Activated CD4-positive, alpha-beta T cell treated with anti-CD3 and anti-CD28 coated beads for 36 hours (primary cell): ENCODE measurements at regions of chr11 and their contacts with region 1.

Region 1: GRCh38 chr11:506238-506994 is 626 bp downstream of the RNH1 start:
- DNase-seq: peak; percentile 99
- ATAC-seq: peak; percentile 78
- H3K4me3 Mint-ChIP-seq: peak overlapping the region; percentile 93
- H3K27ac Mint-ChIP-seq: peak overlapping the region; percentile 99
- H3K4me1 Mint-ChIP-seq: peaks cover 22% of the 10 kb centered on the region
- H3K27me3 Mint-ChIP-seq: no peaks in the 10 kb centered on the region

Region 2: GRCh38 chr11:313787-314547 is 192.4 kb before region 1 on chr11 and contains the start of gene IFITM1:
- CTCF ChIA-PET with region 1: no interaction called
- POLR2A ChIA-PET with region 1: no interaction called
- intact Hi-C with region 1: loop called in 1 of 2 experiments (anchors 2 kb)
- DNase-seq: peak; percentile 78
- ATAC-seq: peak; percentile 40
- H3K4me3 Mint-ChIP-seq: peak within 1 kb of the TSS; percentile 95
- H3K27ac Mint-ChIP-seq: peak within 1 kb of the TSS; percentile 99
- H3K4me1 Mint-ChIP-seq: peaks cover 29% of the 10 kb centered on the region
- H3K27me3 Mint-ChIP-seq: no peaks in the 10 kb centered on the region
- total RNA-seq, gene IFITM1: 248 to 285 TPM

Region 3: DNA sequence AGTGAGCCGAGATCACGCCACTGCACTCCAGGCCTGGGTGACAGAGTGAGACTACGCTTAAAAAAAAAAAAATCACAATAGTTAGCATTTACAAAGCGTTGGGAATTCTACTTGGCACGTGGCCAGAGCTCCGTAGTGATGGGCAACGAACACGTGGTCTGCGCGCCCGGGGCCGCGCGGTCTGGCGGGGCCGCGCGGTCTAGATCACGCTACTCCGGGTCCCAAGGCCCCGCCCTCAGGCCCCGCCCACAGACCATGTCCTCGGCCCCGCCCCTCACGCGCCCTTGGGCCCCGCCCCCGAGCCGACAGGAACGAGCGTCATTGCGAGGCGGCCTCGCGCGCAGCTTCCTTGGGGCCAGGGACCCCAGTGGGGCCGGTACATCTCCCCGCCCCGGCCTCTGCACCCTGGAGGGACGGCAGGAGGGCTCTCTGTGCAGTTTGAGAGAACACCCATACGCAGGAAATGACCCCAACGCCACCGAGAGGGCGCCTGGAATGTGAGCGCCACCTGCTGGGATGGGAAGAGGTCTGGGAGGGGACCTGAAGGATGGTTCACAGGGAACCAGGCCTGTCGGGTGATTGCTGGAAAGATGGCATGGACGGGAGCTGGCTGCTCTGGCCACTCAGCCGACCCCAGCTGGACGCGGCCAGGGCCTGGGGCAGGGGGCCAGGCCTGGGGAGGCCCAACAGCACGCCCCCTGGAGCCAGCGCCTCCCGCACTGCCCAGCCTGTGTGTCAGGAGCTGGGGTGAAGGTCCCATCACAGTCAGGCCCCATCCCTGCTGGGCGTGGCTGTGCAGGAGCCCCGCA is 58.3 kb before region 1 on chr11:
- CTCF ChIA-PET with region 1: no interaction called
- POLR2A ChIA-PET with region 1: no interaction called
- intact Hi-C with region 1: loop called (anchors 1 kb)
- DNase-seq: peak; percentile 99
- ATAC-seq: peak; percentile 79
- H3K4me3 Mint-ChIP-seq: peak overlapping the region; percentile 86
- H3K27ac Mint-ChIP-seq: peak overlapping the region; percentile 93
- H3K4me1 Mint-ChIP-seq: peaks cover 16% of the 10 kb centered on the region
- H3K27me3 Mint-ChIP-seq: peaks cover 3% of the 10 kb centered on the region

Region 4: DNA sequence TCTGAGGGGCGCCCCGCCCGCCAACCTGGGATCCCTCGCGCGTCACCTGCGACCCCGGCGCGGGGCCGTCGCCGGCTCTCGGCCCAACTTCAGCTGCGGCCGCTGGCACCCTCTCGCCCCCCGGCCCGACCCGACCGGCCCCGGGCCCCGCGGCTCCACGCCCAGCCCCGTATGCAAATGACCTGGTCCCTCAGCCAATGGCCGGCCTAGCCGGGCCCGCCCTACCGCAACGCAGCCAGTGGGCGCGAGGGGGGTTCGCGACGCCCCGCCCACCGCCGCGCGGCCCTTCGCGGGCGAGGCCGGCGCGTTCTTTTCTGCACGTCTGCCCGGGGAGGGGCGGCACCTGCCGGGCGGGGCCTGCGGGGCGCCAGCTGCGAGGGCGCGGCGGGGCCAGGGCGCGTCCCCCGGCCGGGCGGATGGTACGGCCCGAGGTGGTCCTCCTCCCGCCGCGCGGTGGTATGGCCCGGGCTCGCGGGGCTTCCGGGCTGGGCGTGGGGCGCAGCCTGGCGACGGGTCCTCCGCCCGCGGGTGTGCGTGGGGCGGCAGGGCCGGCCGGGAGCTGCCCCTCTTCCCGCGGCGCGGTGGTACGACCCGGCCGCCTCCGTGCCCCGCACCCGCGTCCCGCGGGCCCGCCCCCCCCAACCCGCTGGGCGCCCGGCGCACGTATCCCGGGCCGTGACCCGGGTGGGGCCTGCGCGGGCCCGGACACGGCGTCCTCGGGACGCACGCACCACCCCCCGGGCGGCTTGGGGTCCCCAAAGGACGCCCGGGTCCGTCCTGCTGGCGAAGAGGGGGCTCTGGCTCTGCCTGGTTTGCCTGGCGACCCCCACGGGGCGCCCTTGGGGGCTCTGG is 62.1 kb after region 1 on chr11:
- CTCF ChIA-PET with region 1: interaction called, 4 read pairs
- POLR2A ChIA-PET with region 1: no interaction called
- intact Hi-C with region 1: loop called in 1 of 2 experiments (anchors 1 kb)
- DNase-seq: peak; percentile 97
- ATAC-seq: peak; percentile 93
- H3K4me3 Mint-ChIP-seq: peak overlapping the region; percentile 88
- H3K27ac Mint-ChIP-seq: peak overlapping the region; percentile 72
- H3K4me1 Mint-ChIP-seq: no peaks in the 10 kb centered on the region
- H3K27me3 Mint-ChIP-seq: no peaks in the 10 kb centered on the region

Region 5: GRCh38 chr11:606257-606656 is 99.8 kb after region 1 on chr11:
- CTCF ChIA-PET with region 1: no interaction called
- POLR2A ChIA-PET with region 1: no interaction called
- intact Hi-C with region 1: no loop called
- DNase-seq: no peak
- ATAC-seq: no peak
- H3K4me3 Mint-ChIP-seq: no peak overlapping the region
- H3K27ac Mint-ChIP-seq: no peak overlapping the region
- H3K4me1 Mint-ChIP-seq: no peaks in the 10 kb centered on the region
- H3K27me3 Mint-ChIP-seq: no peaks in the 10 kb centered on the region

Region 6: DNA sequence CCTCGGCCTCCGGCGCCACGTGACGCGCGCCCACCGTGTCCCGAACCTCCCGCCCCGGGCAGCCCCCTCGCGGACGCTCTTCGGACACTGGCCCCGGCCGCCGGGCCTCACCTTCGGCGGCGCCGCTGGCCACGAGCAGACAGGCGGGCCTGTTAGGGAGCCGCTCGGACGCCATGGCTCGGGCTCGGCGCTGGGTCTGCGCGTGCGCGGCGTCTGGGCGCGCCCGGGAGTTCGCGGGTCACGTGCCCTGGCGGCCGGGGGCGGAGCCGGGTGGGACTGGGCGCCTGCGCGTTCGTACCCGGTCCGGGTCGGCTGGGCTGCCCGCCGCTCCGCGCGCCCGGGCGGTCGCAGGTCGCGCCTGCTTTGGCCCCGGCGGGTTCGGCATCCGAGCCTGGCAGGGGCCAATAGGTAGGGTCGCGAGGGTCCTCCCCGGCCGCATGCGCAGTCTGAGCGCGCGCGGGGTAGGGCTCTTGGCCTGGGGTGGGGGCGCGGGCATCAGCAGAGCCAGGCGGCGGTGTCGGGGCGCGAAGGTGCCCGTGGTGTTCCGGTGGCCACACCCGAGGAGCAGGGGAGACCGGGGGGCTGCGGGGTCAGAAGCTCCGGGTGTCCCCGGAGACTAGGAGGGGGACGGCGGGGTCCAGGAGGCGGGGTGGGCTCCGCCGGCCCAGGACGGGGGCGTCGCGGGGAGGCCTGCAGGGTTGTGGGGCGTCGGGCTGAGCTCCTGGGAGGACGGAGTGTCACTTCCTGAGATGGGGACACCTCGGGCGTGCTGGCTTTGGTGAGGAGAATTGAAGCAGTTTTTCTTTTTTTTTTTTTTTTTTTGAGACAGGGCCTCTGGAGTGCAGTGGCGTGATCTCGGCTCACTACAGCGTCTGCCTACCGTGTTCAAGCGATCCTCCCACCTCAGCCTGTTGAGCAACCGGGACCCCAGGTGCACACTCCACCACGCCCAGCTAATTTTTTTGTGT is 271.2 kb after region 1 on chr11 and contains the start of gene GATD1:
- CTCF ChIA-PET with region 1: no interaction called
- POLR2A ChIA-PET with region 1: no interaction called
- intact Hi-C with region 1: loop called in 1 of 2 experiments (anchors 1 kb)
- DNase-seq: peak; percentile 97
- ATAC-seq: peak; percentile 91
- H3K4me3 Mint-ChIP-seq: peak within 1 kb of the TSS; percentile 89
- H3K27ac Mint-ChIP-seq: peak within 1 kb of the TSS; percentile 82
- H3K4me1 Mint-ChIP-seq: peaks cover 20% of the 10 kb centered on the region
- H3K27me3 Mint-ChIP-seq: no peaks in the 10 kb centered on the region
- total RNA-seq, gene GATD1: 45.7 to 59.8 TPM